Aorta (tissue), 5 donors: ENCODE measurements at regions of chr3 and their contacts with region 1.

Region 1: GRCh38 chr3:184561061-184561912 is at the start of gene EPHB3:
- DNase-seq: peak; percentile 99 to 100
- ATAC-seq: peak; percentile 97
- H3K4me3 ChIP-seq: peak within 1 kb of the TSS; percentile 63 to 69
- H3K27ac ChIP-seq: no peak within 1 kb of the TSS
- H3K4me1 ChIP-seq: no peaks in the 10 kb centered on the region
- H3K27me3 ChIP-seq: no peaks in the 10 kb centered on the region
- total RNA-seq, gene EPHB3: 2.8 to 9.0 TPM

Region 2: GRCh38 chr3:184345317-184346144 is 215.8 kb before region 1 on chr3:
- intact Hi-C with region 1: no loop called
- DNase-seq: peak in 1 of 2 donors; percentile 63
- ATAC-seq: peak; percentile 23
- H3K4me3 ChIP-seq: no peak overlapping the region
- H3K27ac ChIP-seq: no peak overlapping the region
- H3K4me1 ChIP-seq: no peaks in the 10 kb centered on the region
- H3K27me3 ChIP-seq: no peaks in the 10 kb centered on the region

Region 3: GRCh38 chr3:184777336-184778004 is 216.2 kb after region 1 on chr3:
- intact Hi-C with region 1: loop called in 1 of 2 experiments (anchors 1 kb)
- DNase-seq: peak; percentile 91 to 94
- ATAC-seq: peak; percentile 91
- H3K4me3 ChIP-seq: no peak overlapping the region
- H3K27ac ChIP-seq: no peak overlapping the region
- H3K4me1 ChIP-seq: no peaks in the 10 kb centered on the region
- H3K27me3 ChIP-seq: no peaks in the 10 kb centered on the region

Region 4: GRCh38 chr3:184874709-184875644 is 313.7 kb after region 1 on chr3:
- intact Hi-C with region 1: no loop called
- DNase-seq: no peak
- ATAC-seq: no peak
- H3K4me3 ChIP-seq: no peak overlapping the region
- H3K27ac ChIP-seq: no peak overlapping the region
- H3K4me1 ChIP-seq: no peaks in the 10 kb centered on the region
- H3K27me3 ChIP-seq: no peaks in the 10 kb centered on the region